CD4-positive, alpha-beta T cell (primary cell): ENCODE measurements at regions of chr18 and their contacts with region 1.

Region 1: DNA sequence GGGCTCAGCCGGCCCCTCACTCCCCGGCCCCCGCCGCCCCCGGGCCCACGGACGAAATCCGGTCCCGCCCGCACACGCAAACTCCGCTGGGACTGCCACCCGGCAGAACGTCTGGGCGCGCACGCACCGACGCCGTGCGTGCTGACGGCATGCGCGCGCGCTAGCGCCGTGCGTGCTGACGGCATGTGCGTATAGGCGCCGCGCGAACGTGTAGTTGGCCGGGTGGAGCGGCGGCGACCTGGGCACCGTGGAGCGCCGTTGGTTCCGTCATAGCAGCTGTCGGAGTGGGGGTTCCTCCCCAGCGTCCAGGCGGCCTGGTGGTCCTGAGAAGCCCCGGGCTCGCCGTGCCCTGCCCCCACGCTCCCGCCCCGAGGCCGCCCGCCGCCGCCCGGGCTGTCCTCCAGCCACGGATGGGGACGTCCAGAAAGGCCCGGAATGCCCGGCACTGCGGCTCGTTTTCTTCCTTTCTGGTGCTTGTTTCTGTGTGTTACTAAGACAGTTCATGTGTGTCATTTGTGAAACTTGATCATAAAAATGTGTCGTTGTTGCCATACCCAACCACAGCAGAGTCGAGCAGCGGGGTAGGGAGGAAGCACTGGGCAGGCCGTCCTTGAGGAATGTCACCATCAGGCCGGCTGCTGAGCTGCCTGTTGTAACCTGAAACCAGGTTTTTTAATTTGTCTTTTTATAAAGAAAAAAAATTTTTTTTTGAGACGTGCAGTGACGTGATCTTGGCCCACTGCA is at the start of gene TXNL4A:
- DNase-seq: peak; percentile 72 to 94 (median 82)
- ATAC-seq: peak; percentile 93
- H3K4me3 ChIP-seq: peak within 1 kb of the TSS; percentile 82
- H3K4me3 Mint-ChIP-seq: peak within 1 kb of the TSS; percentile 93
- H3K27ac ChIP-seq: peak within 1 kb of the TSS; percentile 84 to 89
- H3K27ac Mint-ChIP-seq: peak within 1 kb of the TSS; percentile 89
- H3K4me1 ChIP-seq: peaks cover 31% of the 10 kb centered on the region
- H3K4me1 Mint-ChIP-seq: peaks cover 39% of the 10 kb centered on the region
- H3K27me3 ChIP-seq: no peaks in the 10 kb centered on the region
- H3K27me3 Mint-ChIP-seq: no peaks in the 10 kb centered on the region
- CTCF ChIP-seq: no peak
- total RNA-seq, gene TXNL4A: 55.0 to 55.7 TPM

Region 2: DNA sequence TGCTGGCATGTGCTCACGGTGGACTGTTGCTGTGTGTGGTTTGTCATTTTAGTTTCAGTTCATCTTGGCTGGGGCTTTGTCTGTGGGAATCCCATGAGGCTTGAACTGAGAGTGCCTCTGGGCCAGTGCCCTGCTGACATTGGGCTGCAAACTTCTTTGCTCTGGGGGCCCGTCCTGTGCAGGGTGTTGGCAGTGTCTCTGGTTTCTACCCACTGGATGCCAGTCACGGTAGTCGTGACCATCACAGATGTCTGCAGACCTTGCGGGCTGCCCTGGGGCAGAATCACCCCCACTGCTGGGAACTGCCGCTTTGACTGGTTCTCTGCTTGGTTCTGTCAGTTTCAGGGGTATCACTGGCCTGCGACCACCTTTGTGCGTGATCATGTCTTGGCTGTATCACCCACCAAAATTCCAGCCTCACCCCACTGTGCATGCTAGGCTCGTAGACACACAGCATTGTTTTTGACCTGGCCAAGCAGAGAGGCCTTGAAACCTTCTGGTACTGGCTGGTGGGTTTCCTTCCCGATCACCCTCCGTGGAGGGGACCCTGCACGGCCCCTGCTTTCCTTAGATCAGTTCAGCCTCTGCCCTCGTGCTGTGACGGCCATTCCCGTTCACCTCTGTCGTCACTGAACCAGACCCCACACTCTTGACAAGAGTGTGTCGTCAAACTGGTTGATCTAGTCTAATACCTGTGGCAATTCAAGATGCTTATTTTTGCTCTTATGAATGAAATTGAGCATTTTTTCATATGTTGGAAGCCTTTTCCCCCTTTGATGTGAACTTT is 133.3 kb before region 1 on chr18:
- CTCF ChIA-PET with region 1: no interaction called
- POLR2A ChIA-PET with region 1: no interaction called
- intact Hi-C with region 1: no loop called
- DNase-seq: peak in 1 of 14 experiments; percentile 20
- ATAC-seq: no peak
- H3K4me3 ChIP-seq: no peak overlapping the region
- H3K4me3 Mint-ChIP-seq: no peak overlapping the region
- H3K27ac ChIP-seq: no peak overlapping the region
- H3K27ac Mint-ChIP-seq: no peak overlapping the region
- H3K4me1 ChIP-seq: peaks cover 5% of the 10 kb centered on the region
- H3K4me1 Mint-ChIP-seq: peaks cover 7% of the 10 kb centered on the region
- H3K27me3 ChIP-seq: no peaks in the 10 kb centered on the region
- H3K27me3 Mint-ChIP-seq: peaks cover 17% of the 10 kb centered on the region
- CTCF ChIP-seq: no peak

Region 3: DNA sequence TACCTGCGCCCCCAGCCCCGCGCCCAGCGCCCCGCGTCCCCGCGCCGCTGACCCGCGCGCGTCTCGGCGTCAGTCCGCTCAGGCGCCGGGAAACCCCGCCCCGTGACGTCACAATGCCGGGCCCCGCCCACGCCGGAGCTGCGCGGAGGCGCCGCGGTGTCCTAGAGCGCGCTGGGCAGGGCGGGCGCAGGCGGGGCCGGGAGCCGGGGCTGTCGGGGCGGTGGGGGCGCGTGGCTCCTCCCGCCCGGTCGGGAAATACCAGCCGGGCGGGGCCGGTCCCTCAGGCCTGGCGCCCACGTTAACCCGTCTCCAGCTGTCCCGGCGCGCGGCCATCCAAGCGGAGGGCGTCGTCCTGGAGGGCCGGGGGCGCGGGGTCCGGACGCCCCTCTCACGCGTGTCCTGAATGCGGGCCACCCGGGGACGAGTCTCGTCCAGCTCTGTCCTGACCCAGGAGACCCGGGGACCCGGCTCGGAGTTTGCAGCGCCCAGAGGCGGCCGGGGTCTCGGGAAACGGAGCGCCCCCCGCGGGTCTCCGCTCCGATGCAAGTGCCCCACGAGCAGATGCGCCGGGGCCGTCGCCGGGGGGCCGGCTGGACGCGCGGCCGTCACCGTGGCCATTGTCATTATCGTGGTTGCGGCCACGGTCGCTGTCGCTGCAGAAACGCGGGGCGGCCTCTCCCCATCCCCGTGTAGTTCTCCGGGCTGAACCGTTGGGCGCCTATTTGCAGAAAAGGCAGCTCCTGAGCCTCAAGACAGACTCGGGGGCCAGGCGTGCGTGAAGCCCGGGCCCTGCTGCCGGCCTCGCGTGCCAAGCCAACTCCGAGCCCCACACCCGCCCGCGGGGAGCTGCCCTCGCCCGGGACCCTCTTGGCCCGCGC is 36.8 kb before region 1 on chr18 and contains the start of gene SLC66A2:
- CTCF ChIA-PET with region 1: interaction called, 8 read pairs
- POLR2A ChIA-PET with region 1: interaction called, 9 read pairs
- intact Hi-C with region 1: loop called (anchors 2 kb)
- DNase-seq: peak; percentile 86 to 99 (median 96)
- ATAC-seq: peak; percentile 91
- H3K4me3 ChIP-seq: peak within 1 kb of the TSS; percentile 62
- H3K4me3 Mint-ChIP-seq: peak within 1 kb of the TSS; percentile 87
- H3K27ac ChIP-seq: peak within 1 kb of the TSS in 1 of 2 donors; percentile 35
- H3K27ac Mint-ChIP-seq: peak within 1 kb of the TSS; percentile 80
- H3K4me1 ChIP-seq: peaks cover 36% of the 10 kb centered on the region
- H3K4me1 Mint-ChIP-seq: peaks cover 29% of the 10 kb centered on the region
- H3K27me3 ChIP-seq: no peaks in the 10 kb centered on the region
- H3K27me3 Mint-ChIP-seq: no peaks in the 10 kb centered on the region
- CTCF ChIP-seq: no peak
- total RNA-seq, gene SLC66A2: 44.5 to 44.8 TPM

Region 4: DNA sequence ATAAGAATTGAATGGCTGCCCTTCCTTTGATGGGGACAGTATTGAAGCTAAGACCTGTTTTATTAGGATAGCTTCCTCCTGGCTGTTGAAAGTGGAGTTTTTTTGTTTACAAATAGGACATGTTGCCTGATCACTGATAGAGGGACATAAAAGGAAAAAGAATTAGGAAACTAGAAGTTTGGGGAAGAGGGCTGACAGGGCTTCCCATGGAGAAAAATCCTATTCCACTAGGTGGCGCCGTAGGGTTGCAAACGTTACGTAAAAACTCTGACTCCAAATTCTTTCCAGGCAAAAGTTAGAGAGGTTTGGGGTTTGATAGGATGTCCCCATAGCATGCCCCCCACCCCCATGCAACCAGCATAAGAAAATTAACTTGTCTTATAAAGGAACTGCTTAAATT is 34.5 kb after region 1 on chr18:
- CTCF ChIA-PET with region 1: no interaction called
- POLR2A ChIA-PET with region 1: no interaction called
- intact Hi-C with region 1: no loop called
- DNase-seq: peak in 1 of 14 experiments; percentile 28
- ATAC-seq: no peak
- H3K4me3 ChIP-seq: no peak overlapping the region
- H3K4me3 Mint-ChIP-seq: no peak overlapping the region
- H3K27ac ChIP-seq: no peak overlapping the region
- H3K27ac Mint-ChIP-seq: no peak overlapping the region
- H3K4me1 ChIP-seq: no peaks in the 10 kb centered on the region
- H3K4me1 Mint-ChIP-seq: no peaks in the 10 kb centered on the region
- H3K27me3 ChIP-seq: no peaks in the 10 kb centered on the region
- H3K27me3 Mint-ChIP-seq: no peaks in the 10 kb centered on the region
- CTCF ChIP-seq: no peak

Region 5: GRCh38 chr18:80108728-80109675 is 120.4 kb after region 1 on chr18 and contains the start of gene ADNP2:
- CTCF ChIA-PET with region 1: no interaction called
- POLR2A ChIA-PET with region 1: interaction called, 4 read pairs
- intact Hi-C with region 1: loop called (anchors 2 kb)
- DNase-seq: peak; percentile 48 to 96 (median 76)
- ATAC-seq: peak; percentile 81
- H3K4me3 ChIP-seq: peak within 1 kb of the TSS; percentile 75
- H3K4me3 Mint-ChIP-seq: peak within 1 kb of the TSS; percentile 92
- H3K27ac ChIP-seq: peak within 1 kb of the TSS; percentile 86 to 96
- H3K27ac Mint-ChIP-seq: peak within 1 kb of the TSS; percentile 98
- H3K4me1 ChIP-seq: peaks cover 16% of the 10 kb centered on the region
- H3K4me1 Mint-ChIP-seq: peaks cover 51% of the 10 kb centered on the region
- H3K27me3 ChIP-seq: no peaks in the 10 kb centered on the region
- H3K27me3 Mint-ChIP-seq: no peaks in the 10 kb centered on the region
- CTCF ChIP-seq: no peak
- total RNA-seq, gene ADNP2: 61.0 to 61.5 TPM

Region 6: GRCh38 chr18:80183273-80184050 is 194.8 kb after region 1 on chr18:
- CTCF ChIA-PET with region 1: no interaction called
- POLR2A ChIA-PET with region 1: no interaction called
- intact Hi-C with region 1: no loop called
- DNase-seq: no peak
- ATAC-seq: no peak
- H3K4me3 ChIP-seq: no peak overlapping the region
- H3K4me3 Mint-ChIP-seq: no peak overlapping the region
- H3K27ac ChIP-seq: no peak overlapping the region
- H3K27ac Mint-ChIP-seq: no peak overlapping the region
- H3K4me1 ChIP-seq: no peaks in the 10 kb centered on the region
- H3K4me1 Mint-ChIP-seq: no peaks in the 10 kb centered on the region
- H3K27me3 ChIP-seq: no peaks in the 10 kb centered on the region
- H3K27me3 Mint-ChIP-seq: peaks cover 7% of the 10 kb centered on the region
- CTCF ChIP-seq: no peak